ENCODE measurements at regions of chr9 and their contacts with region 1.

Region 1: DNA sequence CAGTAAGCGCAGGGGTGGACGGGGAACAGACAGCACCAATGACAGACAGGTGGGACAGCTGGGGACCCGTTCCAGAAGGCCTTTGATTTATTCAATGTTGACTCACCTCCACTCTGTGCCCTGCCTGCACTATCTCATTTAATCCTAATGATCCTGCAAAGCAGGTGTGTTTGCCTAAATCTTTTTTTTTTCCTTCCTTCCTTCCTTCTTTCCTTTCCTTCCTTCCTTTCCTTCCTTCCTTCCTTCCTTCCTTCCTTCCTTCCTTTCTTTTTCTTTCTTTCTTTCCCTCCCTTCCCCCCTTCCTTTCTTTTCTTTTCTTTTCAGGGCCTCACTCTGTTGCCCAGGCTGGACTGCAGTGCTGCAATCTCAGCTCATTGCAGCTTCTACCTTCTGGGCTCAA is 17.1 kb upstream of the CORO2A start:
- DNase-seq: no peak
- ATAC-seq: no peak
- H3K4me3 Mint-ChIP-seq: no peak overlapping the region
- H3K27ac Mint-ChIP-seq: no peak overlapping the region
- H3K4me1 Mint-ChIP-seq: peaks cover 2% of the 10 kb centered on the region
- H3K27me3 Mint-ChIP-seq: no peaks in the 10 kb centered on the region

Region 2: GRCh38 chr9:98185611-98186171 is 23.8 kb before region 1 on chr9:
- POLR2A ChIA-PET with region 1: no interaction called
- DNase-seq: no peak
- ATAC-seq: no peak
- H3K4me3 Mint-ChIP-seq: no peak overlapping the region
- H3K27ac Mint-ChIP-seq: no peak overlapping the region
- H3K4me1 Mint-ChIP-seq: peaks cover 11% of the 10 kb centered on the region
- H3K27me3 Mint-ChIP-seq: no peaks in the 10 kb centered on the region

Region 3: GRCh38 chr9:98241357-98242300 is 32.1 kb after region 1 on chr9:
- POLR2A ChIA-PET with region 1: interaction called, 13 read pairs
- DNase-seq: no peak
- ATAC-seq: no peak
- H3K4me3 Mint-ChIP-seq: no peak overlapping the region
- H3K27ac Mint-ChIP-seq: no peak overlapping the region
- H3K4me1 Mint-ChIP-seq: peaks cover 2% of the 10 kb centered on the region
- H3K27me3 Mint-ChIP-seq: no peaks in the 10 kb centered on the region

Measured in activated naive CD8-positive, alpha-beta T cell treated with anti-CD3 and anti-CD28 coated beads, Interleukin-2, amount 10 ng/mL, durations not matched to agents 7 days and 5 days (primary cell).